Endothelial cell of umbilical vein (primary cell): ENCODE measurements at regions of chr13 and their contacts with region 1.

Region 1: DNA sequence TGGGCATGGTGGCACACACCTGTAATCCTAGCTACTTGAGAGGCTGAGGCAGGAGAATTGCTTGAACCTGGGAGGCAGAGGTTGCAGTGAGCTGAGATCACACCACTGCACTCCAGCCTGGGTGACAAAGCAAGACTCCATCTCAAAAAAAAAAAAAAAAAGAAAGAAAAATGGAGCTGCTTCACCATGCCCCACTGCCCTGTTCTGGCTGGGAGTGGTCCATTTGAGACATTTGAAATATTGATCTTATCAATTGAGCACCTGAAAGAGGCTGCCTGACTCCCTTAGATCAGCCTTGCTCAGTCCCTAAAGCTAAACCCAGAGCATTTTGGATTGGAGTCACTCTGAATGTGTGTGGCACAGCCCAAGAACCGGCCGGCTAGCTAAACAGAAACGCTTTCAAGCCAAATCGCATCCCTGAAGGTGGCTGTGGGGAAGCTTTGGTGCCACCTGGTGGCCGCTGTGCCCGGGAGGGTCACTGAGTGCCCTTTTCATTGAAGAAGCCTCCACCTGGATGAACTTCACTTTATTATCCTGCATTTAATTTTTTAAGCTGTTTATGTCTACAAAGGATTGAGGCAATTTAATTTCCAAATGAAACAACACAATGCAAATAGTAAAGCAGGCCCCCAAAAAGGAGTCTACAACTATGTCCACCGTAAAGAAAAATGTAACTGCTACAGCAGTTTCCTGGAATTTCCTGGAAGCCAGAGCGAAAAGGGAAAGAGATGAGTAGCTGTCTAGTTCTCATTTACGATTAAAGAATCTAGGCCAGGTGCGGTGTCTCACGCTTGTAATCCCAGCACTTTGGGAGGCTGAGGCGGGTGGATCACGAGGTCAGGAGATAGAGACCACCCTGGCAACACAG is 53.1 kb upstream of the SERPINE3 start:
- DNase-seq: peak; percentile 73
- H3K4me3 ChIP-seq: no peak overlapping the region
- H3K27ac ChIP-seq: no peak overlapping the region
- H3K4me1 ChIP-seq: no peaks in the 10 kb centered on the region
- H3K27me3 ChIP-seq: peaks cover 0 to 3% of the 10 kb centered on the region in 2 experiments
- CTCF ChIP-seq: peak; percentile 87 to 92
- POLR2A ChIP-seq: no peak

Region 2: DNA sequence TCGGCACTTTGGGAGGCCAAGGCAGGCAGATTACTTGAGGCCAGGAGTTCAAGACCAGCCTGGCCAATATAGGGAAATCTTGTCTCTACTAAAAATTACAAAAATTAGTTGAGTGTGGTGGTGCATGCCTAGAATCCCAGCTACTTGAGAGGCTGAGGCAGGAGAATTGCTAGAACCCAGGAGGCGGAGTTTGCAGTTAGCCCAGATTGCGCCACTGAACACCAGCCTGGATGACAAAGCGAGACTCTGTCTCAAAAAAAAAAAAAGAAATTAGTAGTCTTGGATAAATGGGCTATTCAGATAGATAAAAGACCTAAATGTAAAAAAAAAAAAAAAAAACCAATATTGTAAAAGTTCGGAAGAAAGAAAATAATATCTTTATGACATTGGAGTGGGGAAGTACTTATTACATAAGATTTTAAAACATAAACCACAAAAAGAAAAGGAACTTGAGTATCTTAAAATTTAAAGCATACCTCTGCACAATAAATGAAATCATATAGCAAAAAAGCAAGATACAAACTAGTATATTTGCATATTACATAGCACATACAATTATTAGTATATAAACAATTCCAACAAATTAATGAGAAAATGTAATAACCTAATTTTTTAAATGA is 403.4 kb before region 1 on chr13:
- CTCF ChIA-PET with region 1: no interaction called
- POLR2A ChIA-PET with region 1: no interaction called
- dilution Hi-C with region 1: no loop called
- intact Hi-C with region 1: no loop called
- DNase-seq: no peak
- H3K4me3 ChIP-seq: no peak overlapping the region
- H3K27ac ChIP-seq: no peak overlapping the region
- H3K4me1 ChIP-seq: no peaks in the 10 kb centered on the region
- H3K27me3 ChIP-seq: peaks cover 2% of the 10 kb centered on the region in 2 experiments
- CTCF ChIP-seq: no peak
- POLR2A ChIP-seq: no peak

Region 3: GRCh38 chr13:51125498-51126226 is 160.7 kb before region 1 on chr13:
- CTCF ChIA-PET with region 1: interaction called, 432 read pairs
- POLR2A ChIA-PET with region 1: no interaction called
- dilution Hi-C with region 1: no loop called
- intact Hi-C with region 1: loop called (anchors 1 kb)
- DNase-seq: peak; percentile 60
- H3K4me3 ChIP-seq: no peak overlapping the region
- H3K27ac ChIP-seq: no peak overlapping the region
- H3K4me1 ChIP-seq: no peaks in the 10 kb centered on the region
- H3K27me3 ChIP-seq: peaks cover 4 to 15% of the 10 kb centered on the region in 2 experiments
- CTCF ChIP-seq: peak; percentile 82 to 88
- POLR2A ChIP-seq: no peak

Region 4: DNA sequence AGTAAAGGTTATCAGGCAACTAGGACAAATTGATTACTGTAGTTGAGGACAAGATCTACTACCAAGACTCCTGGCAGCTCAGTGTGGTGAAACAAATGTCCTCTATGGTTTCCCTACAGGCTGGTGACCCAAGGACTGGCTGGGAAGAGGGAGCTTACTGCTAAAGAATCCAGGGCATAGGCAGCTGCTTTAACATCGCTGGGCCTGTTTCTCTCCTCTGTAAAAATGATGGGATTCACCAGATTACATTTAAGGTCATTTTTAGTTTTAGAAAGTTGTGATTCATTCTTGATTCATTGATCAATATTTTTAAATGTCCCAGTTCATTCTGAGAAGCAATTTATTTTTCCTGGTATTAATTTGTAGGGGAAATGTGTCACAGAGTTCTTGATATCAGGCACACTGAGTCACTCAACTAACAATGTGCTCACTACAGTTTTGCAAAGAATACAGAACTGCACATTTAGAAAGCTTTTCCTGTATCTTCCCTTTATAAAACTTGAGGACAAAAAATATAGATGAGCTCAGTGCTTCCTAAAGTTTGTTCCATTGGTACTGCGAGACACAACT is 83.8 kb before region 1 on chr13:
- CTCF ChIA-PET with region 1: interaction called, 16 read pairs
- POLR2A ChIA-PET with region 1: no interaction called
- dilution Hi-C with region 1: no loop called
- intact Hi-C with region 1: no loop called
- DNase-seq: peak; percentile 73
- H3K4me3 ChIP-seq: no peak overlapping the region
- H3K27ac ChIP-seq: peak overlapping the region; percentile 82
- H3K4me1 ChIP-seq: peaks cover 16% of the 10 kb centered on the region
- H3K27me3 ChIP-seq: no peaks in the 10 kb centered on the region
- CTCF ChIP-seq: no peak
- POLR2A ChIP-seq: no peak

Region 5: DNA sequence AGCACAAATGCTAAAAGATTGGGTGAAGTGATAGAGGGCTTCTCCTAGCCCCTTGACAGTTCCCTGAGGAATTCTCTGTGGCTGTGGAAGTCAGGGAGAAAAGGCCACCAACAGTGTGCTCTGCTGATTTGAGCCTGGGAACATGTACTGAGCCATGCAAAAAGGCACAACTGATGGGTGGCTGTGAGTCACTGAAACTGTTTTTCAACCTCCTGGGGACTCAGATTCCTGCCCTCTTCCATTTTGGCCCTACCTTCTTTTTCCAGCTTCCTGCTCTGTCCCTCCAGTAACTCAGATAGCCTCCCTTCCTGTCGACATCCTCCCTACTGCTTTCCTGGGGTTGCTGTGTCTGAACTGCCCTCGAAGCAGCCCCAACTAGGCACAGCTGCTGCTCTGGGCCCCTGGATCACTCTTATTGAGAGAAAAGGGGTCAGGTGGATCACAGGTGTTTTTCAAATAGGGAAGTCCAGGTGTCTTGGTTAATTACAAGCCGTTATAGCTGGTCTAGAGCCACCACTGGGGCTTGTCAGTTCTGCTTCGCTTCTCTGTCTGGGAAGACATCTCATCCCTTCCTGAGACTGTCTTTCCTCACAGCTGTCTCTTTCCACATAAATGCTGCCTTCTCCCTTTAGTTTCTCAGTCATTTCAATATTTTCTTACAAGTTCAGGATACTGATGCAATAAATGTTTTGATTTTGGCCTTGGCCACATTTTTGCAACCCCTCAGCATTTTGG is 50.4 kb before region 1 on chr13:
- CTCF ChIA-PET with region 1: interaction called, 18 read pairs
- POLR2A ChIA-PET with region 1: no interaction called
- dilution Hi-C with region 1: no loop called
- intact Hi-C with region 1: no loop called
- DNase-seq: peak; percentile 44
- H3K4me3 ChIP-seq: no peak overlapping the region
- H3K27ac ChIP-seq: no peak overlapping the region
- H3K4me1 ChIP-seq: peaks cover 14% of the 10 kb centered on the region
- H3K27me3 ChIP-seq: no peaks in the 10 kb centered on the region
- CTCF ChIP-seq: no peak
- POLR2A ChIP-seq: no peak

Region 6: GRCh38 chr13:51269039-51269438 is 17.3 kb before region 1 on chr13:
- CTCF ChIA-PET with region 1: interaction called, 31 read pairs
- POLR2A ChIA-PET with region 1: no interaction called
- dilution Hi-C with region 1: no loop called
- intact Hi-C with region 1: no loop called
- DNase-seq: no peak
- H3K4me3 ChIP-seq: no peak overlapping the region
- H3K27ac ChIP-seq: no peak overlapping the region
- H3K4me1 ChIP-seq: peaks cover 2% of the 10 kb centered on the region
- H3K27me3 ChIP-seq: no peaks in the 10 kb centered on the region
- CTCF ChIP-seq: no peak
- POLR2A ChIP-seq: no peak

Region 7: GRCh38 chr13:51797664-51798488 is 511.5 kb after region 1 on chr13:
- CTCF ChIA-PET with region 1: interaction called, 17 read pairs
- POLR2A ChIA-PET with region 1: no interaction called
- dilution Hi-C with region 1: no loop called
- intact Hi-C with region 1: no loop called
- DNase-seq: peak; percentile 36
- H3K4me3 ChIP-seq: no peak overlapping the region
- H3K27ac ChIP-seq: no peak overlapping the region
- H3K4me1 ChIP-seq: peaks cover 24% of the 10 kb centered on the region
- H3K27me3 ChIP-seq: no peaks in the 10 kb centered on the region
- CTCF ChIP-seq: peak; percentile 16 to 27
- POLR2A ChIP-seq: no peak